CD8-positive, alpha-beta T cell (primary cell): ENCODE measurements at regions of chr17 and their contacts with region 1.

Region 1: DNA sequence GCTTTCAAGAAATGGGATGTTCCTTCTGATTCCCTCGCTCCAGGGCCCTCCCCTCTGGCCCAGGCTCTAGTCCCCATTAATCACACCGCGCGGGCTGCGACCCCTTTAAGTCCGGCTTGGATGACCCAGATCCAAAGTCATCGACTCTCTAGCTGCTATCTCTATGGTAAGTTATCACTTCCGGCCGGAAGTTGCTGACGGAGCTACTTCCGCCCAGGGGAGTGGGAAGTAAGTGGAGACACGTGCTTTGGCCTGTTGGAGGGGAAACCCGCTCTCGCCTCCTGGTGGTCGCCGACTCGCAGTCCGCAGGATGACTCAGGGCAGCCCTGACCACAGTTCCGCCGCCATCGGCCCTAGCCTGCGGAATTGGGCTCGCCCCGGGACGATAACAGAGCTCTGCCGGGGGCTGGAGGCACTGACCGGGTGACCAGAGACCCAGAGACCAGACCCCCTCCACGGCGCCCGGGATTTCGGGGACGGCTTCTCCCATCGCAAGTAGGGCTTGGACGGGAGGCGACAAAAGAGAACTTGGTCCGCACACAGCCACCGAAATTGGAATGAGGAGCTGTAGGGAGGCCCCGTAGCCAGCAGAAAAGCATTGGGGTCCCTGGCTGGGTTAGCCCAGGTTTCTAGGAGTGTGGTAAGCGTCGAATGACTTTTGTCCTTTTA is 52.2 kb upstream of the SEC14L1 start:
- DNase-seq: peak; percentile 73 to 96 (median 86)
- ATAC-seq: peak; percentile 82
- H3K4me3 ChIP-seq: peak overlapping the region; percentile 55 to 96
- H3K4me3 Mint-ChIP-seq: peak overlapping the region; percentile 98
- H3K27ac ChIP-seq: peak overlapping the region; percentile 81 to 93
- H3K27ac Mint-ChIP-seq: peak overlapping the region; percentile 99
- H3K4me1 ChIP-seq: peaks cover 37% of the 10 kb centered on the region
- H3K4me1 Mint-ChIP-seq: peaks cover 48% of the 10 kb centered on the region
- H3K27me3 ChIP-seq: no peaks in the 10 kb centered on the region
- H3K27me3 Mint-ChIP-seq: peaks cover 2% of the 10 kb centered on the region
- CTCF ChIP-seq: peak; percentile 64

Region 2: DNA sequence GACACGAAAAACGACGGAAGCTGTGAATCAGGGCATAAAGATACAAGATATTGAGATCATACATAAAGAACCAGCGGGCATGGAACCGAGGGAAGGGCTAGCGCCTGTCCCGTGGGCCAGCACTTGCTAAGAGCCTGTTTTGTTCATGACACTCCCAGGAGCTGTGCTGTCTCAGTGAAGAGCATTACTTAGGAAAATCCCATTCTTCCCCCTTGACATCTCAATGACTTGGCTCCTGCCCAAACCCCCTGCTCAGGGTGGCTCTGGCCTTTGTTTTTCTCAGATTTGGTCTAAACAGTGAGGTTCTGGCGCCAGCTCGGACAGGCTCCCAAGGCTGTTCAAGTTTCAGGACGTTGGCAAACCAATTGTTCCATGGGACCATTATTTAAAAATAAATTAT is 26.9 kb before region 1 on chr17:
- CTCF ChIA-PET with region 1: interaction called, 15 read pairs
- POLR2A ChIA-PET with region 1: no interaction called
- intact Hi-C with region 1: no loop called
- DNase-seq: no peak
- ATAC-seq: no peak
- H3K4me3 ChIP-seq: no peak overlapping the region
- H3K4me3 Mint-ChIP-seq: no peak overlapping the region
- H3K27ac ChIP-seq: no peak overlapping the region
- H3K27ac Mint-ChIP-seq: no peak overlapping the region
- H3K4me1 ChIP-seq: no peaks in the 10 kb centered on the region
- H3K4me1 Mint-ChIP-seq: peaks cover under 1% of the 10 kb centered on the region
- H3K27me3 ChIP-seq: peaks cover 0 to 5% of the 10 kb centered on the region in 2 experiments
- H3K27me3 Mint-ChIP-seq: peaks cover 12% of the 10 kb centered on the region
- CTCF ChIP-seq: no peak

Region 3: DNA sequence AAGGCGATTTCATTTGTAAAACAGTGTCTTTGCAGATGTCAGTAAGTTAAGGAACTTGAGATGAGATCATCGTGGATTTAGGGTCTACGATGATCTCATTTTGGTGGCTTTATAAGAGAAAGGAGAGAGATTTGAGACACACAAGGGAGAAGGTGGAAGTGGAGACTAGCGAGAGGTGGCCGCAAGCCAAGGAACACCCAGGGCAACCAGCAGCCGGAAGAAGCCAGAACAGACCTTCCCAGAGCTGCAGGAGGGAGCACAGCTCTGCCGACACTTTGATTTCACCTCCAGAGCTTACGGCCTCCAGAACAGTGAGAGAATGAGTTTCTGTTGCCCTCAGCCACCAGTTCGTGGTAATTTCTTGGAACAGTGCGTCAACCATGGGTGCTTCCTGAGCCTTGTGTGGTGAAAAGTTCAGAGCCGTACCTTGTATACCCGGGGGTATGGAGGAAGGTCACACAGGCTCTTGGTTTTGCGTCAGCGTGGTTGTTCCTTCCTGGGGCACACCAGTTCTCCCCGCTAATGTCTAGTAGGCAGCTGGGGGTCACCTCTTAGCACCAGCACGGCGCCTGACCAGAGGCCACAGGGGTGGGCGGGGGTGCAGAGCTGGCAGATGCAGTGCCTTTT is 39.3 kb after region 1 on chr17:
- CTCF ChIA-PET with region 1: interaction called, 4 read pairs
- POLR2A ChIA-PET with region 1: interaction called, 3 read pairs
- intact Hi-C with region 1: loop called in 1 of 2 experiments (anchors 2 kb)
- DNase-seq: peak; percentile 37 to 93 (median 73)
- ATAC-seq: peak; percentile 89
- H3K4me3 ChIP-seq: peak overlapping the region; percentile 35 to 38
- H3K4me3 Mint-ChIP-seq: peak overlapping the region; percentile 65
- H3K27ac ChIP-seq: peak overlapping the region; percentile 56 to 81
- H3K27ac Mint-ChIP-seq: peak overlapping the region; percentile 93
- H3K4me1 ChIP-seq: peaks cover 22% of the 10 kb centered on the region
- H3K4me1 Mint-ChIP-seq: peaks cover 23% of the 10 kb centered on the region
- H3K27me3 ChIP-seq: no peaks in the 10 kb centered on the region
- H3K27me3 Mint-ChIP-seq: no peaks in the 10 kb centered on the region
- CTCF ChIP-seq: no peak

Region 4: GRCh38 chr17:77214743-77215142 is 126.2 kb after region 1 on chr17:
- CTCF ChIA-PET with region 1: interaction called, 10 read pairs
- POLR2A ChIA-PET with region 1: no interaction called
- intact Hi-C with region 1: no loop called
- DNase-seq: peak in 4 of 9 experiments; percentile 21 to 47 (median 28)
- ATAC-seq: peak; percentile 55
- H3K4me3 ChIP-seq: no peak overlapping the region
- H3K4me3 Mint-ChIP-seq: no peak overlapping the region
- H3K27ac ChIP-seq: no peak overlapping the region
- H3K27ac Mint-ChIP-seq: no peak overlapping the region
- H3K4me1 ChIP-seq: no peaks in the 10 kb centered on the region
- H3K4me1 Mint-ChIP-seq: no peaks in the 10 kb centered on the region
- H3K27me3 ChIP-seq: no peaks in the 10 kb centered on the region
- H3K27me3 Mint-ChIP-seq: no peaks in the 10 kb centered on the region
- CTCF ChIP-seq: no peak

Region 5: DNA sequence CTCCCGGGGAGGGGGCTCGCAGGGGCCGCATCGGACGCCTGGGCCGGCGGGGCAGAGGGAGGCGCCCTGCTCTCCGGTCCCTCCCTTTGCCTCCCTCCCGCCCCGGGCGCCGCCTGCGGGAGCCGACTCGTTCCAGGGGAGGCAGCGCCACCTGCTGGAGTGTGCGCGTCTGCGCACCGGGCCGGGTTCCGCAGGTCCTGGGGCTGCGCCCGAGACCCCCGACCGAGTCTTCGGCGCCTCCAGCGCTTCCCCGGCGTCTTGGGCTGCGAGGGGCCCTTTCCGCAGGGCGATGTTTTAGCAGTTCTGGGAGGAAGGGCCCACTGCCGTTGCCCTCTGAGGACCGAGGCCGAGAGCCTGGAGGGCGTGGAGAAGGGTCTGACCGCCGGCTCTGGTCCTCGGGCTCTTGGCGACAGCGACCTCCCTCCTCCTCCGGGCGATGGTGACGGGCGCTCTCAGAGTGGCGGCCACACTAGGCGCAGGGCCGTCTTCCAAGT is 158.5 kb after region 1 on chr17:
- CTCF ChIA-PET with region 1: interaction called, 45 read pairs
- POLR2A ChIA-PET with region 1: no interaction called
- intact Hi-C with region 1: loop called (anchors 1 kb)
- DNase-seq: peak; percentile 77 to 93 (median 85)
- ATAC-seq: peak; percentile 99
- H3K4me3 ChIP-seq: peak overlapping the region; percentile 37 to 55
- H3K4me3 Mint-ChIP-seq: peak overlapping the region; percentile 69
- H3K27ac ChIP-seq: no peak overlapping the region
- H3K27ac Mint-ChIP-seq: peak overlapping the region; percentile 27
- H3K4me1 ChIP-seq: peaks cover 11% of the 10 kb centered on the region
- H3K4me1 Mint-ChIP-seq: peaks cover 9% of the 10 kb centered on the region
- H3K27me3 ChIP-seq: no peaks in the 10 kb centered on the region
- H3K27me3 Mint-ChIP-seq: peaks cover 26% of the 10 kb centered on the region
- CTCF ChIP-seq: peak; percentile 97

Region 6: DNA sequence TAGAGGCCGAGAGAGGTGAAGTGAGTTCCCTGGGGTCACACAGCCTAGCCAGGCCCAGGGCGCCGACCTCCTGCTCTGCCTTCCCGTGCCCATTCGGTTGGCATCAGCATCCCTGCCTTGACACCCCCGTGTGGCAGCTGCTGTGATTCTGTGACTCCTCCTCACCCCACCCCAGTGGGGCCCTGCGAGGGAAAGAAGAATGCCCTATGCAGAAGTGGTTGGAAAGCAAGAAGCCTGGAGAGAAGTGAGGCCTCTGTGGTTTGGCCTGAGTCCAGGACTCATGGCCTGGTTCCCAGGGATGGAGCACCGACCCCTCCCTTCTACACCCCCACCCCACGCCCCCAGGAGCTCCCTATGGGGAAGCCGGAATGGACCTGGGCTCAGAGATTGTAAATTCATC is 348.4 kb after region 1 on chr17:
- CTCF ChIA-PET with region 1: no interaction called
- POLR2A ChIA-PET with region 1: no interaction called
- intact Hi-C with region 1: no loop called
- DNase-seq: peak in 6 of 9 experiments; percentile 42 to 61 (median 56)
- ATAC-seq: no peak
- H3K4me3 ChIP-seq: peak overlapping the region in 1 of 2 experiments; percentile 70
- H3K4me3 Mint-ChIP-seq: peak overlapping the region; percentile 95
- H3K27ac ChIP-seq: peak overlapping the region; percentile 46 to 66
- H3K27ac Mint-ChIP-seq: peak overlapping the region; percentile 97
- H3K4me1 ChIP-seq: peaks cover 83% of the 10 kb centered on the region
- H3K4me1 Mint-ChIP-seq: peaks cover 88% of the 10 kb centered on the region
- H3K27me3 ChIP-seq: no peaks in the 10 kb centered on the region
- H3K27me3 Mint-ChIP-seq: no peaks in the 10 kb centered on the region
- CTCF ChIP-seq: no peak